ENCODE measurements at regions of chr3 and their contacts with region 1.

Region 1: DNA sequence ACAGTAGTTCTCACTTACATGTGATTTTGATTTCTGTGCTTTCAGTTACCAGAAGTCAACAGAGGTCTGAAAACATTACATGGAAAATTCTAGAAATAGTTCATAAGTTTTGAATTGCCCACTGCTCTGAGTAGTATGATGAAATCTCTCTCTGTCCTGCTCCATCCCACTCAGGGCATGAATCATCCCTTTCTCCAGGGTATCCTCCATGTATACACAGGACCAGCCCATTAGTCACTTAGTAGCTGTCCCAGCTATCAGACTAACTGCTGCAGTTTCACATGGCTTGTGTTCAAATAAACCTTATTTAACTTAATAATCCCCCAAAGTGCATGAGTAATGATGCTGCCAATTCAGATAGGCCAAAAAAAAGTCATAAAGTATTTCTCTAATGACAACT is 38.6 kb downstream of the EPHA3 start:
- DNase-seq: no peak
- H3K4me3 ChIP-seq: no peak overlapping the region
- H3K27ac ChIP-seq: no peak overlapping the region
- H3K4me1 ChIP-seq: no peaks in the 10 kb centered on the region
- H3K27me3 ChIP-seq: no peaks in the 10 kb centered on the region
- CTCF ChIP-seq: no peak
- POLR2A ChIP-seq: no peak

Region 2: GRCh38 chr3:89013536-89013935 is 132.5 kb before region 1 on chr3:
- CTCF ChIA-PET with region 1: no interaction called
- POLR2A ChIA-PET with region 1: no interaction called
- dilution Hi-C with region 1: no loop called
- intact Hi-C with region 1: no loop called
- DNase-seq: no peak
- H3K4me3 ChIP-seq: no peak overlapping the region
- H3K27ac ChIP-seq: no peak overlapping the region
- H3K4me1 ChIP-seq: no peaks in the 10 kb centered on the region
- H3K27me3 ChIP-seq: no peaks in the 10 kb centered on the region
- CTCF ChIP-seq: no peak
- POLR2A ChIP-seq: no peak

Region 3: GRCh38 chr3:89116476-89116875 is 29.5 kb before region 1 on chr3:
- CTCF ChIA-PET with region 1: no interaction called
- POLR2A ChIA-PET with region 1: no interaction called
- dilution Hi-C with region 1: no loop called
- intact Hi-C with region 1: loop called (anchors 1 kb)
- DNase-seq: no peak
- H3K4me3 ChIP-seq: no peak overlapping the region
- H3K27ac ChIP-seq: no peak overlapping the region
- H3K4me1 ChIP-seq: no peaks in the 10 kb centered on the region
- H3K27me3 ChIP-seq: no peaks in the 10 kb centered on the region
- CTCF ChIP-seq: no peak
- POLR2A ChIP-seq: no peak

Region 4: DNA sequence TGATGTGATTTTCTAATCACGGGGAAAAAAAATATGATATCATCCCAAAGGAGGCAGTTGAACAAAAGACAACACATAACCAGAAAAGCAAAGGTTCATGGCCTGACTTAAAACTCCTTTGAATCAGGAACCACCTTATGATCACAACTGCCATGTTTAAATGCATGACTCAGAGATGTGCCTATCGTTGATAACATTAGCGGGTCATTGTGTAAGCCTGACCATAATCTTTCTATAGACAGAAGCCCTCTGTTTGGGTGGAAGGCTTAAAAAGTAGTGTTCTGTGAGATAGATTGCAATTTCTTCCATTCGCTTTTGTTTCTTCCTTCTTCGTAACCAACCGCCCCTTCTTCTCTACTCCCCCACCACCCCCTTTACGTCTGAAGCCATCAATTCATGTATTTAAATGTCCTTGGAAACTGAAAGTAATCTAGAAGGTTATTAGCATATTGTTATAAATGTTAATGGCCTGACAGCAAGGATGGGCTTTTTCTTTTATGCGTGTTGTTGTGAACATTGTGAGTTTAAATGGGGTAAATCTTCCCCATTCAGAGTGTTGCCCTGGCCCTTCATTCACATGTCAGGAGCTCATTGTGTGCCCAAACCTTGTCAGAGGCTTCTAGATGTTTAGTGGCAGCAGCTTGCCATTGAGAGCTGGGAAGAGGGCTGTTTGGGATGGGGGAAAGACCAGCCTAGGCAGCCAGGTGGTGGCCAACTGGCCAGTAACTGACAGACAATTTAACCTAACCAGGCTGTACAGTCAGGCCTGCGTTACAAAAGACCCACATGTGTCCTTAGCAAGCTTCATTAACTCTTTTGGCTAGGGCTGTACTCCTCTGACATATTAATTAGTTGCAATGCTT is 25.9 kb after region 1 on chr3:
- CTCF ChIA-PET with region 1: no interaction called
- POLR2A ChIA-PET with region 1: no interaction called
- dilution Hi-C with region 1: no loop called
- intact Hi-C with region 1: no loop called
- DNase-seq: no peak
- H3K4me3 ChIP-seq: no peak overlapping the region
- H3K27ac ChIP-seq: no peak overlapping the region
- H3K4me1 ChIP-seq: no peaks in the 10 kb centered on the region
- H3K27me3 ChIP-seq: no peaks in the 10 kb centered on the region
- CTCF ChIP-seq: no peak
- POLR2A ChIP-seq: no peak